ENCODE measurements at regions of chr6 and their contacts with region 1.

Region 1: DNA sequence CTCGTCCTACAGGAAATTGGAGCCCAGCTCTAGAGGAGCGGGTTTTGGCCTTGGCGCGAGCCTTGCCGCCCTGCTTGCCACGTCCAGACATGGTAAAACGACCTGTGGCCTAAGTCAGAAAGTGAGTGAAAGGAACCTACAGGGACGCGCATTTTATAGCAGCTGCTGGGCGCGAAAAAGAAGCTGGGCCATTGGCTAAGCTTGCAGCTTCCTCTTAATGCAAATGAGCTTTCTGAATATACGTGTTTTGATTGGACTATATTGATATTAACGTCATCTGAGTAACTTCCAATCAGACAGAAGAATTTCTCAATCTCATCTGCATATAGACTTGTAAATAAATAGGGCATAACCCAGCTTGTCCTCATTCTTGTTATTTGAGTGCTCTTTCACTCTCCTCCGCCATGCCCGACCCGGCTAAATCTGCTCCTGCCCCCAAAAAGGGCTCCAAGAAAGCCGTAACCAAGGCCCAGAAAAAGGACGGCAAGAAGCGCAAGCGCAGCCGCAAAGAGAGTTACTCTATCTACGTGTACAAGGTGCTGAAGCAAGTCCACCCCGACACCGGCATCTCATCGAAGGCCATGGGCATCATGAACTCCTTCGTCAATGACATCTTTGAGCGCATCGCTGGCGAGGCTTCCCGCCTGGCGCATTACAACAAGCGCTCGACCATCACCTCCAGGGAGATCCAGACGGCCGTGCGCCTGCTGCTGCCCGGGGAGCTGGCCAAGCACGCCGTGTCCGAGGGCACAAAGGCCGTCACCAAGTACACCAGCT is 18.9 kb downstream of the OR2B2 start:
- DNase-seq: peak; percentile 75 to 95 (median 92)
- ATAC-seq: peak; percentile 83
- H3K4me3 ChIP-seq: peak overlapping the region; percentile 72
- H3K4me3 Mint-ChIP-seq: no peak overlapping the region
- H3K27ac ChIP-seq: peak overlapping the region; percentile 82
- H3K27ac Mint-ChIP-seq: peak overlapping the region in 1 of 9 donors; percentile 97
- H3K4me1 ChIP-seq: peaks cover 4 to 20% of the 10 kb centered on the region in 2 donors
- H3K4me1 Mint-ChIP-seq: peaks cover 9 to 55% (median 30%) of the 10 kb centered on the region in 7 donors
- H3K27me3 ChIP-seq: no peaks in the 10 kb centered on the region
- H3K27me3 Mint-ChIP-seq: peaks cover 0 to 8% (median 0%) of the 10 kb centered on the region in 5 donors

Region 2: GRCh38 chr6:26045065-26045927 is 1848.0 kb before region 1 on chr6:
- CTCF ChIA-PET with region 1: no interaction called
- POLR2A ChIA-PET with region 1: interaction called, 11 read pairs
- intact Hi-C with region 1: loop called in 1 of 2 experiments (anchors 1 kb)
- DNase-seq: peak; percentile 39 to 93 (median 89)
- ATAC-seq: peak; percentile 68
- H3K4me3 ChIP-seq: peak overlapping the region; percentile 91
- H3K4me3 Mint-ChIP-seq: peak overlapping the region; percentile 87 to 98 (median 94)
- H3K27ac ChIP-seq: peak overlapping the region; percentile 90
- H3K27ac Mint-ChIP-seq: peak overlapping the region; percentile 80 to 98 (median 95)
- H3K4me1 ChIP-seq: peaks cover 7 to 19% of the 10 kb centered on the region in 2 donors
- H3K4me1 Mint-ChIP-seq: peaks cover 8 to 51% (median 20%) of the 10 kb centered on the region in 7 donors
- H3K27me3 ChIP-seq: no peaks in the 10 kb centered on the region
- H3K27me3 Mint-ChIP-seq: peaks cover 0 to 3% (median 0%) of the 10 kb centered on the region in 5 donors

Region 3: DNA sequence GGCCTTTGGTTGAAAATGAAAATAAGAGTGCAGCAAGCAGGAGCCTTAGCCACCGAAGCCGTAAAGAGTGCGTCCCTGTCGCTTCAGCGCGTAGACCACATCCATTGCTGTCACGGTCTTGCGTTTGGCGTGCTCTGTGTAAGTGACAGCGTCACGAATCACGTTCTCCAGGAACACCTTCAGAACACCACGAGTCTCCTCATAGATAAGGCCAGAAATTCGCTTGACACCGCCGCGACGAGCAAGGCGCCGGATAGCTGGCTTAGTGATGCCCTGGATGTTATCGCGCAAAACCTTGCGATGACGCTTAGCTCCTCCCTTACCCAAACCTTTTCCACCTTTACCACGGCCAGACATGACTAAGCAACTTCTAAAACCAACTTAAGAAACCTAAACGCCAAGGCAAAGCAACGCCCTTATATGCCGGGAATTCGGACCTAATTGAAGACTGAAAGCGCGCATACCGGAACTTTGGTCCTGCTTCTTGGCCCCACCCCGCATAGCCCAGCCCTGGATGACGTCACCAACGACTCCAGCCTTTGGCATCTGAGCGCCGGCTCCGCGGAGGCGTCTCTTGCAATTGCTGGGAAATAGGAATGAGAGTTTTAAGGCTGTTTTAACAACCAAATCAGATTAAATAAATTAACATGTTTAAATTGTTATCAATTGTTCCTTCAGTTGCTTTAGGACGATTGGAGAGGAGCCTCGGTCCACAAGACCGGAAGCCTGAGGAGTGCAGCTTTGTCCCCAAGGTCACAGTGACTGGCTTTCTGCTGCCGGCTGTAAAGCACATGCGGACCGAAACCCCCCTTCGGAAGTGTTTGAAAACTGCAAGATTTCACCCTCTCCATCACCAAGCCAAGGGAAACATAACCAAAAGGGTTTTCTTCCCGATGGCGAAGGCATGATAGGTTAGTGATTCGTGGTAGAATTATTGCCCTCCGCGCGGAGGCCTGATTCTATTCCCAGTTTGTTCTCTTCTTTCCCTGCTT is 1607.8 kb before region 1 on chr6:
- CTCF ChIA-PET with region 1: no interaction called
- POLR2A ChIA-PET with region 1: interaction called, 18 read pairs
- intact Hi-C with region 1: loop called in 1 of 2 experiments (anchors 5 kb)
- DNase-seq: peak; percentile 72 to 97 (median 92)
- ATAC-seq: peak; percentile 91
- H3K4me3 ChIP-seq: peak overlapping the region; percentile 88
- H3K4me3 Mint-ChIP-seq: peak overlapping the region; percentile 86 to 96 (median 90)
- H3K27ac ChIP-seq: peak overlapping the region; percentile 91
- H3K27ac Mint-ChIP-seq: peak overlapping the region; percentile 91 to 100 (median 98)
- H3K4me1 ChIP-seq: peaks cover 0 to 8% of the 10 kb centered on the region in 2 donors
- H3K4me1 Mint-ChIP-seq: peaks cover 7 to 48% (median 33%) of the 10 kb centered on the region in 7 donors
- H3K27me3 ChIP-seq: no peaks in the 10 kb centered on the region
- H3K27me3 Mint-ChIP-seq: peaks cover 0 to 9% (median 5%) of the 10 kb centered on the region in 5 donors

Region 4: DNA sequence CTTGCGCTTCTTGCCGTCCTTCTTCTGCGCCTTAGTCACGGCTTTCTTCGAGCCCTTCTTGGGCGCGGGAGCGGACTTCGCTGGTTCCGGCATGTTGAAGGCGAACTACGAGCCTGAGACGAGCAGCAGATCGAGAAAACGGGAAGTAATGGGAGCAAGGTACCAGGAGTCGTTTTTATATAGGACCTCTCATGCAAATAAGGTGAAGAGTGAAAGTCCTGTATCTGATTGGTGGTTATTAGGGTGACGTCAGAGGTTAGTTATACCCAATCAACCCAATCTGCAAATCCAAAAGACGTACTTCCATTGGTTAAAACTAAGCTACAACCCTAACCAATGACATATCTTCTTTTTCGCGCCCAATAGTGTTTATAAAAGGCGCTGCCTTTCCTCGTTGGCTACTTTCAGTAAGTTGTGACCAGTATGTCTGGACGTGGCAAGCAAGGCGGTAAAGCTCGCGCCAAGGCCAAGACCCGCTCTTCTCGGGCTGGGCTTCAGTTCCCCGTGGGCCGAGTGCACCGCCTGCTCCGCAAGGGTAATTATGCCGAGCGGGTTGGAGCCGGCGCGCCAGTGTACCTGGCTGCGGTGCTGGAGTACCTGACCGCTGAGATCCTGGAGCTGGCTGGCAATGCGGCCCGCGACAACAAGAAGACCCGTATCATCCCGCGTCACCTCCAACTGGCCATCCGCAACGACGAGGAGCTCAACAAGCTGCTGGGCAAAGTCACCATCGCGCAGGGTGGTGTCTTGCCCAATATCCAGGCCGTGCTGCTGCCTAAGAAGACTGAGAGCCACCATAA is 746.3 kb before region 1 on chr6:
- CTCF ChIA-PET with region 1: interaction called, 5 read pairs
- POLR2A ChIA-PET with region 1: interaction called, 95 read pairs
- intact Hi-C with region 1: loop called (anchors 1 kb)
- DNase-seq: peak; percentile 71 to 96 (median 92)
- ATAC-seq: peak; percentile 92
- H3K4me3 ChIP-seq: peak overlapping the region; percentile 90
- H3K4me3 Mint-ChIP-seq: no peak overlapping the region
- H3K27ac ChIP-seq: peak overlapping the region; percentile 89
- H3K27ac Mint-ChIP-seq: no peak overlapping the region
- H3K4me1 ChIP-seq: peaks cover 6 to 7% of the 10 kb centered on the region in 2 donors
- H3K4me1 Mint-ChIP-seq: peaks cover 0 to 26% (median 14%) of the 10 kb centered on the region in 7 donors
- H3K27me3 ChIP-seq: no peaks in the 10 kb centered on the region
- H3K27me3 Mint-ChIP-seq: no peaks in the 10 kb centered on the region

Region 5: DNA sequence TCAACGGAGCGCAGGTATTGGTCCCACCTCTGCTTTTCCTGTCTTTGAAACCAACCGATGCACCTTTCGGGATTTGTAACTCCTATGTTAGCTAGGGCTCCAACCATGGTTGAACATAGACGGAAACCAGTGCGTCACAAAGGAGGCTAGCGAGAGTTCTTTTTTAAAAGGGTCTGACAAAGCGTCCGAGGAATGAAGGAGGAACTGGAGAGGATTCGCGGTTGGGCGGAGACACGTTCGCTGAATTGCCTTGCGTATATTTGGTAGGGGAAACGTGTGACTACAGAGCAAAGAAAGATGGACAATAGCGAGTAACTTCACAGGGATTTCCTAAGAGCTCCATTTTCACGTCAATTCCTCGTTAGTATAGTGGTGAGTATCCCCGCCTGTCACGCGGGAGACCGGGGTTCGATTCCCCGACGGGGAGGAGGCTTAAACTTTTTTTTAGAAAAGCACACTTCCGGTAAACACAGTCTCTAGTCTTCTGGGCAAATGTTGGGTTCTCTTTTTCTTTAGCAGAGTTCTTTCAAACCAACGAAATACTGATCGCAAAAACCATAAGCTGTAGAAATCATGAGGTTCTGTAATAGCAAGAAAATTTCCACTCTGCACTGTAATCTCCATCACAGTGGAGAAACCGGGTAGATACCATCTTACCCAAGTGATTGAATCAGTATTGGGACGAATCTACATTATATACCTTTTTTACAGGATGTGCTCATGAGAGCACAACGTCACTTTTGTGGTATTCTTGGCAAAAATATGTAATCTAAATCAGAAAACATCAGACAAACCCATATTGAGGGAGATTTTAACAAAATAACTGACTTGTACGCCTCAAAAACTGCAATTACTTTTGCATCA is 413.7 kb before region 1 on chr6:
- CTCF ChIA-PET with region 1: no interaction called
- POLR2A ChIA-PET with region 1: interaction called, 21 read pairs
- intact Hi-C with region 1: loop called (anchors 1 to 2 kb)
- DNase-seq: peak; percentile 84 to 97 (median 95)
- ATAC-seq: peak; percentile 83
- H3K4me3 ChIP-seq: peak overlapping the region; percentile 95
- H3K4me3 Mint-ChIP-seq: no peak overlapping the region
- H3K27ac ChIP-seq: peak overlapping the region; percentile 97
- H3K27ac Mint-ChIP-seq: no peak overlapping the region
- H3K4me1 ChIP-seq: peaks cover 9 to 12% of the 10 kb centered on the region in 2 donors
- H3K4me1 Mint-ChIP-seq: peaks cover 0 to 9% (median 5%) of the 10 kb centered on the region in 7 donors
- H3K27me3 ChIP-seq: no peaks in the 10 kb centered on the region
- H3K27me3 Mint-ChIP-seq: peaks cover 0 to 17% (median 0%) of the 10 kb centered on the region in 5 donors

Region 6: GRCh38 chr6:27825025-27825793 is 68.0 kb before region 1 on chr6:
- CTCF ChIA-PET with region 1: interaction called, 12 read pairs
- POLR2A ChIA-PET with region 1: interaction called, 209 read pairs
- intact Hi-C with region 1: loop called in 1 of 2 experiments (anchors 2 kb)
- DNase-seq: no peak
- ATAC-seq: no peak
- H3K4me3 ChIP-seq: peak overlapping the region; percentile 87
- H3K4me3 Mint-ChIP-seq: peak overlapping the region; percentile 82 to 99 (median 94)
- H3K27ac ChIP-seq: peak overlapping the region; percentile 89
- H3K27ac Mint-ChIP-seq: peak overlapping the region; percentile 90 to 100 (median 98)
- H3K4me1 ChIP-seq: peaks cover 6% of the 10 kb centered on the region in 2 donors
- H3K4me1 Mint-ChIP-seq: peaks cover 11 to 50% (median 33%) of the 10 kb centered on the region in 7 donors
- H3K27me3 ChIP-seq: no peaks in the 10 kb centered on the region
- H3K27me3 Mint-ChIP-seq: peaks cover 0 to 4% (median 0%) of the 10 kb centered on the region in 5 donors

Region 7: DNA sequence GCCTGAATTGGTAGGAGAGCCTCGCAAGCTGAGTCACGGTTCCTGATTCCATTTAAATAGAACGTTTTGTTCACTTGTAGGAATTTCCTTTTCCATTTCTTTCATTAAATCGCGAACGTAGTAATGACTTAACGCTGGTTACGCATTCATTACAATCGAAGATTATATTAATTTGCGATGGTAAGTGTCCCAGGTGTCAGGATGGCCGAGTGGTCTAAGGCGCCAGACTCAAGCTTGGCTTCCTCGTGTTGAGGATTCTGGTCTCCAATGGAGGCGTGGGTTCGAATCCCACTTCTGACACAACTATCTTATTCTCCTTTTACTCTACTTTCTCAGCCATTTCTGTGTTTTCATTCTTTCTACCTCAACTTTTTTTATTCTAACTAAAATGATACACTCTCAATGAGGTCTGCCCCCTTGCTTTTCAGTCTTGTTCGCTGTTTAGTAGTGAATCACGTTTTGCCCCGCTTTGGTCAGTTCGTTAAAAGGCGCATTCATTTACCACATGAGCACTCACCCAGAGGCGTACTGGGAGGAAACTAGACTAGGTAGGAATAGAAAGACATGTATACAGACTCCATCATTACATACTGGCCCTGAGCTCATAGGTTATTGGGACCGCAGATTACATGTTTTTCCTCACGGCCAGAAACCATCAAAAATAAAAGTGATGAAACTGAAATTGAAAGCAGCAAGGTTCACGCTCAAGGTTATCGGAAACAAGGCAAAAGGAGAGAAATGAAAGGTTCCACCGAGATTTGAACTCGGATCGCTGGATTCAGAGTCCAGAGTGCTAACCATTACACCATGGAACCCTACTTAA is 1047.8 kb after region 1 on chr6:
- CTCF ChIA-PET with region 1: no interaction called
- POLR2A ChIA-PET with region 1: no interaction called
- intact Hi-C with region 1: loop called in 1 of 2 experiments (anchors 5 kb)
- DNase-seq: peak; percentile 35 to 90 (median 83)
- ATAC-seq: peak; percentile 76
- H3K4me3 ChIP-seq: peak overlapping the region; percentile 82
- H3K4me3 Mint-ChIP-seq: peak overlapping the region; percentile 86 to 99 (median 92)
- H3K27ac ChIP-seq: peak overlapping the region; percentile 60
- H3K27ac Mint-ChIP-seq: peak overlapping the region; percentile 90 to 99 (median 94)
- H3K4me1 ChIP-seq: peaks cover 22 to 30% of the 10 kb centered on the region in 2 donors
- H3K4me1 Mint-ChIP-seq: peaks cover 34 to 64% (median 56%) of the 10 kb centered on the region in 7 donors
- H3K27me3 ChIP-seq: no peaks in the 10 kb centered on the region
- H3K27me3 Mint-ChIP-seq: peaks cover 0 to 6% (median 0%) of the 10 kb centered on the region in 5 donors